Left ventricle myocardium inferior (tissue), 1 donor: ENCODE measurements at regions of chr20 and their contacts with region 1.

Region 1: GRCh38 chr20:53578492-53579222 is 15.0 kb downstream of the ZNF217 start:
- DNase-seq: no peak
- H3K4me3 ChIP-seq: peak overlapping the region; percentile 29
- H3K27ac ChIP-seq: peak overlapping the region; percentile 66
- H3K4me1 ChIP-seq: peaks cover 59% of the 10 kb centered on the region
- H3K27me3 ChIP-seq: no peaks in the 10 kb centered on the region
- CTCF ChIP-seq: peak; percentile 92

Region 2: DNA sequence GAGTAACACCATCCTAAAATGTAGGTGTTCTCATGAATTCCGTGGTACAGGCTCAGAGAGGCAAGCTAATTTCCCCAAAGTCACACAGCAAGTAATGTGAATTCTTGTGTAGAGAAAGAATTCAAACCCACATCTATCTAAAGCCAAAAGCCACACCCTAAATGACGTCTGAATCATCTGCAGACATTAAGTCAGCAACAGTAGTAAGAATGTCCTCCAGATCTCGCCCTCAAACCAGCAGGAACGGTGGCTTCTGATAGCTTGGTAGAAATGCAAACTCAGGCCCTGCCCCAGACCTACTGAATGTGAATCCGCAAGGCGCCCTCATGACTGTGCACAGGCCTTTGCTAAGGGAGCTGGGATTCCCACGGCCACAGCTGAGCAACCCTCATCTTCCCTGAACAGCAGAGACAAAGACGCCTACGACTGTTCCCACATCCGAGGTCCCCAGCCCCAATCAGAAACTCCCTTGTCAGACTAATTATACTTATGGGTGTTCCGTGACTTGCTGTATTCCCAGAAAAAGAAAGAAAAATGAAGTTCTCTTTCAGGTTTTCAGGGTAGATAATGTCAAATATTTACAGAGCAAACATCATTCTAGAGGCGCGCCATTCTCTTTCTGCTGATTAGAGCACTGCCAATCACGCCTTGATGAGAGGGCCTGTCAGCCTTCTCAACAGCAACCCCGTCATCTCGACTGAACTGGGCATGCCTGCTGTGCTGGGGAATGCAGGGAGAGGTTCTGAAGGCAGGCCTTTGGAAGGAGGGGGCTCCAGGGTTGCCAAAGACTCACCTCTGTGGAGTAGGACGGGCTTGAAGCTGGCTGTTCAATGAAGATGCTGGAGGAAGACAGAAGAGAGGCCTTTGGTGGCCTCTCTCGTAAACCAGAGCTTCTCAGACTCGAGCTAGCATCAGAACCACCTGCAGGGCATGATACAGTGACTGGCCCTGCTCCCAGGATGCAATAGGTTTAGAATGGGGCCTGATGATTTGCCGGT is 65.1 kb before region 1 on chr20:
- intact Hi-C with region 1: no loop called
- DNase-seq: no peak
- H3K4me3 ChIP-seq: no peak overlapping the region
- H3K27ac ChIP-seq: no peak overlapping the region
- H3K4me1 ChIP-seq: no peaks in the 10 kb centered on the region
- H3K27me3 ChIP-seq: no peaks in the 10 kb centered on the region
- CTCF ChIP-seq: no peak

Region 3: GRCh38 chr20:54062812-54063280 is 484.2 kb after region 1 on chr20:
- intact Hi-C with region 1: loop called (anchors 10 kb)
- DNase-seq: no peak
- H3K4me3 ChIP-seq: no peak overlapping the region
- H3K27ac ChIP-seq: no peak overlapping the region
- H3K4me1 ChIP-seq: peaks cover 3% of the 10 kb centered on the region
- H3K27me3 ChIP-seq: peaks cover 18% of the 10 kb centered on the region
- CTCF ChIP-seq: peak; percentile 67